GM10248 (cell line): ENCODE measurements at regions of chrX and their contacts with region 1.

Region 1: GRCh38 chrX:16903274-16904022 is 33.3 kb upstream of the RBBP7 start:
- DNase-seq: peak; percentile 17
- CTCF ChIP-seq: no peak

Region 2: GRCh38 chrX:16892504-16893362 is 10.7 kb before region 1 on chrX:
- CTCF ChIA-PET with region 1: interaction called, 14 read pairs
- POLR2A ChIA-PET with region 1: no interaction called
- DNase-seq: peak; percentile 67
- CTCF ChIP-seq: peak; percentile 73

Region 3: DNA sequence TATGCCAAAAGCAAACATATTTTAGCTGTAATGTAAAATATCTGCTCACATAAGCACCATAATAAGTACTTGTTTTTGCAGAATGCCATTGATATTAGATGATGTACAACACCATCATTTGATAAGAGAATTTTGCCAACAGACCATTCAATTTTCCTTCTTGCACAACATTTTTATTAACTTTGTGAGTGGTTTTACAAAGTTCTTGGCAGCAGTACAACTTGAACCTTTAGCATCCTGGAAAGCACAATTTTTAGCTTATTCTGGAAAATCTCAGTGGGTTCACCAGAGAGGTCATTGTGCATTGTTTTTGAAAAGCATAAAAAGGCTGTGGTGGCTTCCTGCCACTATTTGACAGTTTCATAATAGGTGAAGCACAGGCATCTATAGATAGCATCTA is 16.6 kb after region 1 on chrX:
- CTCF ChIA-PET with region 1: no interaction called
- POLR2A ChIA-PET with region 1: no interaction called
- DNase-seq: no peak
- CTCF ChIP-seq: no peak

Region 4: DNA sequence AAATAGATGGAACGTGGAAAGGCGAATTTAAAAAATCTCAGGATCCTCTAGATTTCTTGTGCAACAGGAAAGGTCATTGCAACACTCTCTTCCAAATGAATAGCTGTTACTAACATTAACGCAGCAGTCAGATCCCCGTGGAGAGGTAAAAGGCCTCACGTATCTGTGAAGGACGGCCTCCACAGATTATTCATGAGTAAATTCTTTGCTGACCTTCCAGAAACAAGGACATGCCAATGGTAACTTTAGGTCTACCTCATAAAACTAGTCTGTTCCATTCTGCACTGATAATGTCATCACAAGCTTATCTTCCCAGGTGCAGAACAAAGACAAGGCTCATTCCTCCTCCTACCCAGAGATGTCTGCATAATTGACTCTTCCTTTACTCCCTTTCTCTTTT is 26.9 kb after region 1 on chrX:
- CTCF ChIA-PET with region 1: no interaction called
- POLR2A ChIA-PET with region 1: no interaction called
- DNase-seq: no peak
- CTCF ChIP-seq: no peak